Heart left ventricle (tissue), 16 donors: ENCODE measurements at regions of chr22 and their contacts with region 1.

Region 1: GRCh38 chr22:38353142-38353629 is 36.0 kb upstream of the CSNK1E start:
- DNase-seq: peak; percentile 63 to 88 (median 69)
- ATAC-seq: peak in 3 of 4 donors; percentile 65 to 81 (median 81)
- H3K4me3 ChIP-seq: no peak overlapping the region
- H3K27ac ChIP-seq: peak overlapping the region in 4 of 12 donors; percentile 21 to 60 (median 24)
- H3K4me1 ChIP-seq: peaks cover 0 to 11% (median 4%) of the 10 kb centered on the region in 12 donors
- H3K27me3 ChIP-seq: no peaks in the 10 kb centered on the region
- CTCF ChIP-seq: peak; percentile 97 to 100 (median 99)
- POLR2A ChIP-seq: no peak

Region 2: GRCh38 chr22:38305471-38306448 is 47.4 kb before region 1 on chr22:
- intact Hi-C with region 1: loop called in 1 of 10 experiments (anchors 10 kb)
- DNase-seq: peak in 1 of 5 donors; percentile 47
- ATAC-seq: peak in 2 of 4 donors; percentile 23 to 31
- H3K4me3 ChIP-seq: peak overlapping the region in 3 of 12 donors; percentile 8 to 14 (median 11)
- H3K27ac ChIP-seq: peak overlapping the region; percentile 18 to 100 (median 76)
- H3K4me1 ChIP-seq: peaks cover 18 to 83% (median 74%) of the 10 kb centered on the region in 12 donors
- H3K27me3 ChIP-seq: no peaks in the 10 kb centered on the region
- CTCF ChIP-seq: no peak
- POLR2A ChIP-seq: no peak

Region 3: GRCh38 chr22:38524429-38524828 is 171.2 kb after region 1 on chr22:
- intact Hi-C with region 1: no loop called
- DNase-seq: no peak
- ATAC-seq: no peak
- H3K4me3 ChIP-seq: no peak overlapping the region
- H3K27ac ChIP-seq: no peak overlapping the region
- H3K4me1 ChIP-seq: no peaks in the 10 kb centered on the region
- H3K27me3 ChIP-seq: peaks cover 0 to 28% (median 0%) of the 10 kb centered on the region in 9 donors
- CTCF ChIP-seq: no peak
- POLR2A ChIP-seq: no peak